ENCODE measurements at regions of chr5 and their contacts with region 1.

Region 1: DNA sequence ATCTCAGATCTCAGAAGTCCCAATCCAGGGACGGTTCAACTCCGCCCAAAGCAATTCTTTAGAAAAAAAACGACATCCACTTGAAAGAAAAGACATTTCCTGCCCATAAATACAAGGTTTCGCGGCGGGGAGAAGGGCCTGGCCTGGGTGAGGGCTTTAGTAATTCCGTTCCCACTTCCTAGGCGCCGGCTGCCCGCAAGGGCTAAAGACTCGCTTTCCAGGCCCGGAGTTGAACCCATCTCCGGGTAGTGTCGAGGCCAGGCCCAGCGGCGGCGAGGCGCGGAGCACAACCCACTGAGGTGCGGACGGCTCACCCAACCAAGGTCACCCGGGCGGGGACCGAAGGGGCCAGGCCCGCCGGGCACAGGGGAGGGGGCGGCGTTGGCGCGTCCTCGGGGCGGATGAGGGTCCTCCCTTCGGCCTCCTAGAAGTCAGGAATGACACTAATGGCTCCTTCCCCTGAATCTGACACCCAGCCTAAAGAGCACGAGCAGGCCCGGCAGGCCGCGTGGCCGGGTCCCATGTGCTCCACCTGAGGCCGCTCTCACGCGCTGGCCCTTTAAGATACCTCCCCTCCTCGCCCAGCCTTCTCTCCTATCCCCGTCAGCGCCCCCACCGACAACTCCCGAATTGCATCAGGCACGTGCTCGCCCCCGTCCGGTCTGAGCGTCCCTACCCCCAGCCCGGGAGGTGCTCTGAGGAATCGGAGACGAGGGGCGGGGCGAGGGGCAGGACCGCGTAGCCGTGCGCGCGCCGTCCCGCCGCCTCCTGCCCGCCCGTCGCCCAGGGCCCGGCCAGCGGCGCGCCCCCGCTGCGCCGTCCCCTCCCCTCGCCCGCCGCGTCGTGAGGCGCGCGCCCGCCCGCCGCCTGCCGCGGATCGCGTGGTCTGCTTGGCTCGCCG is 467 bp upstream of the LARP1 start:
- DNase-seq: peak; percentile 99
- H3K4me3 ChIP-seq: peak overlapping the region; percentile 96
- H3K27ac ChIP-seq: peak overlapping the region; percentile 98
- H3K4me1 ChIP-seq: peaks cover 25% of the 10 kb centered on the region
- H3K27me3 ChIP-seq: no peaks in the 10 kb centered on the region
- CTCF ChIP-seq: peak; percentile 48; the same call in 1 of the 2 replicates

Region 2: DNA sequence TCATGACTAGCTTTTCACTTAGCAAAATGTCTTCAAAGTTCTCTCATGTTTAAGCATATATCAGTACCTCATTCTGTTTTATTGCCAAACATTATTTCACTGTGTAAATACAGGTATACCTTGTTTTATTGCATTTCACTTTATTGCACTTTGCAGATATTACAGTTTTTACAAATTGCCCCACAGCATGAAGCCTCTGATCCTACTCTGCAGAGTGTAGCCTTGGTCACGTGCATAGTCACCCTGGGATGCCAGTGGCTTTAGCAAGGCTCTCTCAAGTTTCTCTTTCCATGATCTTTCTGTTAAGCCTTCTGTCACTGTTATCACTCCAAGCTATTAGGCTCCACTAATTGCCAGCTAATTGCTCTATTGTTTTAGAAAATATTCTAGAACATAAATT is 1446.4 kb before region 1 on chr5:
- CTCF ChIA-PET with region 1: no interaction called
- POLR2A ChIA-PET with region 1: no interaction called
- intact Hi-C with region 1: no loop called
- DNase-seq: no peak
- H3K4me3 ChIP-seq: no peak overlapping the region
- H3K27ac ChIP-seq: no peak overlapping the region
- H3K4me1 ChIP-seq: no peaks in the 10 kb centered on the region
- H3K27me3 ChIP-seq: no peaks in the 10 kb centered on the region
- CTCF ChIP-seq: no peak

Region 3: DNA sequence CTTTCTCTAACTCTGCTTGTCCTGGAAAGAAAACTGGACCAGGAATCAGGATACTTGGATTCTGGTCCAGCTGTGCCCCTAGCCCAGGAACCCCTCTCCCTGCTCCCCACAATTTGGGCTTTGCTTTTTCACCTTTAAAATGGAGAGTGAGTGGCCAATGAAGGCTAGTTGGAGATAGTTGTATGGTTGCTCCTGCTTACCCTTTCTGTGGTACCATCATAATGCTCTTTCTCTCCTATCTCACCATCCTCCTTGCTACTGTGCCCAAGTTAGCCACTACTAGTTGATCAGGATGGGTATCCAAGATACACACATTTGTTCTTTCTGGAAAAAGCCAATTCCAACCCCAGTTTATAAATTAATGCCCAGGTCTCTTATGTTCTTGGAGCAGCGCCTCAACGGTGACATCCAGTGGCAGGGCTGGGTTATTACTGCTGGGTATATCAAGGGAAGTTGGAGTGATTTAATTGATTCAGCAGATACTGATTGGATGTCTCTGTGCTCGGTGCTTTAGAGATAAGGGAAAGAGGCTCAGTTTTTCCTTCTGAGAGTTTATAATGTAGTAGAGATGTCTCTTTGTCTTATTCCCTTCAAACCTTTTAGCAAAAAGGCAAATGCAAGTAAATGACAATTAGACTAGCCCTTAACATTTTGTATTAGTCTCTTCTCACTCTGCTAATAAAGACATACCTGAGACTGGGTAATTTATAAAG is 57.1 kb after region 1 on chr5:
- CTCF ChIA-PET with region 1: no interaction called
- POLR2A ChIA-PET with region 1: no interaction called
- intact Hi-C with region 1: loop called (anchors 5 kb)
- DNase-seq: peak; percentile 61
- H3K4me3 ChIP-seq: no peak overlapping the region
- H3K27ac ChIP-seq: no peak overlapping the region
- H3K4me1 ChIP-seq: no peaks in the 10 kb centered on the region
- H3K27me3 ChIP-seq: no peaks in the 10 kb centered on the region
- CTCF ChIP-seq: peak; percentile 80

Region 4: DNA sequence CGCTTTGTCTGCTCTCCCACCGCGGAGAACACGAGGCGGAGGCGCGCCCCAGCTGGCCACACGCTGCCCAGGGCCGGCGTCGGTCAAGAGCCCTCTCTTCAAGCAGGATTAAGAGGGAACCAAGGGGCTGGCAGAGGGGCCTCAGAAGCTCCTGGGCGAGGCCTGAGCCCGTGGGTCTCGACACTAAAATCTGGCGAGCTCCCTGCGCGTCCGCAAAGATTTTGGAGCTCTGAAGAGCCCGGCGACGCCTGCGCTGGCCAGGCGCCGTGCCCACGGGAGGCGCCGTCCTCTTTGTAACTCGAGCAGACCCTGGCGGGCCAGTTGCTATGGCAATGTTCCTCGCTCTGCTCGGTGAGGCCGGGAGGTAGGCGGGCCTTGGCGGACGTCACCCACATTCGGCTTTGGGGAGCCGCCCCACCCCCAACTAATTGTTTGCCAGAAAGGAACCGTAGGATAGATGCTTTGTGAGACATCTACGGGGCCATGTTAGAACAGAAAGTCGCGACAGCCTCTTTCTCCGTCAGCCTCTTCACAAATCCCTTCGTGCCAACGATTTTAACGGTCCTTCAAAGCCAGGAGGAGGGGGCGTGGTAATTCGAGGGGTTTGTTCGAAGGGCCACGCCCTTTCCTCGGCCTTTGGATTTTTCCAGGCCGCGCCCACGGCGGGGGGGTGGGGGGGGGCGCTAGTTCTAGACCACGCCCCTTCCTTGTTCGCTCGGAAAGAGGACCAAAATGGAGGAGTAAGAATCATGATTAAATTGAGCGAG is 103.0 kb after region 1 on chr5:
- CTCF ChIA-PET with region 1: no interaction called
- POLR2A ChIA-PET with region 1: no interaction called
- intact Hi-C with region 1: loop called (anchors 2 kb)
- DNase-seq: peak; percentile 96
- H3K4me3 ChIP-seq: peak overlapping the region; percentile 60
- H3K27ac ChIP-seq: peak overlapping the region; percentile 99
- H3K4me1 ChIP-seq: peaks cover 29% of the 10 kb centered on the region
- H3K27me3 ChIP-seq: no peaks in the 10 kb centered on the region
- CTCF ChIP-seq: no peak

Measured in A673 (cell line).